ENCODE measurements at regions of chr2 and their contacts with region 1.

Region 1: GRCh38 chr2:203949228-203949627 is 12.7 kb downstream of the ICOS start:
- DNase-seq: peak in 4 of 14 experiments; percentile 33 to 68 (median 48)
- ATAC-seq: peak; percentile 38
- H3K4me3 ChIP-seq: no peak overlapping the region
- H3K4me3 Mint-ChIP-seq: peak overlapping the region; percentile 81
- H3K27ac ChIP-seq: peak overlapping the region; percentile 29 to 49
- H3K27ac Mint-ChIP-seq: peak overlapping the region; percentile 84
- H3K4me1 ChIP-seq: peaks cover 45% of the 10 kb centered on the region
- H3K4me1 Mint-ChIP-seq: peaks cover 92% of the 10 kb centered on the region
- H3K27me3 ChIP-seq: no peaks in the 10 kb centered on the region
- H3K27me3 Mint-ChIP-seq: no peaks in the 10 kb centered on the region
- CTCF ChIP-seq: no peak

Region 2: GRCh38 chr2:203814661-203815540 is 134.3 kb before region 1 on chr2:
- CTCF ChIA-PET with region 1: no interaction called
- POLR2A ChIA-PET with region 1: no interaction called
- intact Hi-C with region 1: no loop called
- DNase-seq: peak; percentile 25 to 85 (median 42)
- ATAC-seq: peak; percentile 89
- H3K4me3 ChIP-seq: peak overlapping the region; percentile 25
- H3K4me3 Mint-ChIP-seq: peak overlapping the region; percentile 85
- H3K27ac ChIP-seq: no peak overlapping the region
- H3K27ac Mint-ChIP-seq: peak overlapping the region; percentile 52
- H3K4me1 ChIP-seq: peaks cover 39% of the 10 kb centered on the region
- H3K4me1 Mint-ChIP-seq: peaks cover 52% of the 10 kb centered on the region
- H3K27me3 ChIP-seq: no peaks in the 10 kb centered on the region
- H3K27me3 Mint-ChIP-seq: no peaks in the 10 kb centered on the region
- CTCF ChIP-seq: peak; percentile 81

Region 3: DNA sequence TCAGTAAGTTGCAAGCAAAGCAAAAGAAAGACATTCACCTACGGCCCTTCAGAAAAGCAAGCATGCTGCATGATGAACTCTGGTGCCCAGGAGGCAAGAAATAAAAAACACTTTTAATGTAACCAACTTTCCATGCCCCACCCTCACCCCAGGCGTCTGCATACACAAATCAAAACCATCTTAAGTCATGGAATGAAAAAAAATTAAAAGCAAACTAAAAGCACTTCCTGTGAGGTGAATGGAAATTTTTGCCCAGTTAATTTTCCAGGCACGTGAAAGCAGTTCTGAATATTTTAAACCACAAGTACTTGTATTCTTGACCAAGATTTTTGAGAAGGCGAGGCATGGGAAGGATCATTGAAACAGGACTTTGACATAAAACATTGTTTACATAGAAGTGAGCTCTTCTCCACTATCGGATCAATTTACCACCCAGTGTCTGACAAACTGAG is 15.2 kb before region 1 on chr2:
- CTCF ChIA-PET with region 1: interaction called, 4 read pairs
- POLR2A ChIA-PET with region 1: interaction called, 21 read pairs
- intact Hi-C with region 1: loop called in 1 of 2 experiments (anchors 1 kb)
- DNase-seq: peak in 9 of 14 experiments; percentile 32 to 71 (median 50)
- ATAC-seq: peak; percentile 40
- H3K4me3 ChIP-seq: peak overlapping the region; percentile 19
- H3K4me3 Mint-ChIP-seq: peak overlapping the region; percentile 83
- H3K27ac ChIP-seq: peak overlapping the region; percentile 67 to 82
- H3K27ac Mint-ChIP-seq: peak overlapping the region; percentile 93
- H3K4me1 ChIP-seq: peaks cover 41% of the 10 kb centered on the region
- H3K4me1 Mint-ChIP-seq: peaks cover 72% of the 10 kb centered on the region
- H3K27me3 ChIP-seq: no peaks in the 10 kb centered on the region
- H3K27me3 Mint-ChIP-seq: no peaks in the 10 kb centered on the region
- CTCF ChIP-seq: no peak

Region 4: GRCh38 chr2:203997980-203998809 is 49.0 kb after region 1 on chr2:
- CTCF ChIA-PET with region 1: no interaction called
- POLR2A ChIA-PET with region 1: interaction called, 3 read pairs
- intact Hi-C with region 1: loop called in 1 of 2 experiments (anchors 5 kb)
- DNase-seq: peak in 3 of 14 experiments; percentile 19 to 54 (median 44)
- ATAC-seq: no peak
- H3K4me3 ChIP-seq: no peak overlapping the region
- H3K4me3 Mint-ChIP-seq: peak overlapping the region; percentile 42
- H3K27ac ChIP-seq: no peak overlapping the region
- H3K27ac Mint-ChIP-seq: peak overlapping the region; percentile 86
- H3K4me1 ChIP-seq: peaks cover 39% of the 10 kb centered on the region
- H3K4me1 Mint-ChIP-seq: peaks cover 77% of the 10 kb centered on the region
- H3K27me3 ChIP-seq: no peaks in the 10 kb centered on the region
- H3K27me3 Mint-ChIP-seq: no peaks in the 10 kb centered on the region
- CTCF ChIP-seq: no peak

Region 5: GRCh38 chr2:204015118-204015843 is 66.1 kb after region 1 on chr2:
- CTCF ChIA-PET with region 1: no interaction called
- POLR2A ChIA-PET with region 1: no interaction called
- intact Hi-C with region 1: loop called in 1 of 2 experiments (anchors 1 kb)
- DNase-seq: peak in 4 of 14 experiments; percentile 49 to 74 (median 67)
- ATAC-seq: peak; percentile 84
- H3K4me3 ChIP-seq: no peak overlapping the region
- H3K4me3 Mint-ChIP-seq: no peak overlapping the region
- H3K27ac ChIP-seq: no peak overlapping the region
- H3K27ac Mint-ChIP-seq: peak overlapping the region; percentile 51
- H3K4me1 ChIP-seq: peaks cover 4% of the 10 kb centered on the region
- H3K4me1 Mint-ChIP-seq: peaks cover 26% of the 10 kb centered on the region
- H3K27me3 ChIP-seq: no peaks in the 10 kb centered on the region
- H3K27me3 Mint-ChIP-seq: no peaks in the 10 kb centered on the region
- CTCF ChIP-seq: no peak

Measured in CD4-positive, alpha-beta T cell (primary cell).